ENCODE measurements at regions of chr9 and their contacts with region 1.

Region 1: GRCh38 chr9:6566409-6567139 is 79.0 kb downstream of the GLDC start:
- H3K4me3 Mint-ChIP-seq: no peak overlapping the region
- H3K27ac Mint-ChIP-seq: no peak overlapping the region
- H3K4me1 Mint-ChIP-seq: peaks cover 39% of the 10 kb centered on the region
- H3K27me3 Mint-ChIP-seq: peaks cover 3% of the 10 kb centered on the region

Region 2: DNA sequence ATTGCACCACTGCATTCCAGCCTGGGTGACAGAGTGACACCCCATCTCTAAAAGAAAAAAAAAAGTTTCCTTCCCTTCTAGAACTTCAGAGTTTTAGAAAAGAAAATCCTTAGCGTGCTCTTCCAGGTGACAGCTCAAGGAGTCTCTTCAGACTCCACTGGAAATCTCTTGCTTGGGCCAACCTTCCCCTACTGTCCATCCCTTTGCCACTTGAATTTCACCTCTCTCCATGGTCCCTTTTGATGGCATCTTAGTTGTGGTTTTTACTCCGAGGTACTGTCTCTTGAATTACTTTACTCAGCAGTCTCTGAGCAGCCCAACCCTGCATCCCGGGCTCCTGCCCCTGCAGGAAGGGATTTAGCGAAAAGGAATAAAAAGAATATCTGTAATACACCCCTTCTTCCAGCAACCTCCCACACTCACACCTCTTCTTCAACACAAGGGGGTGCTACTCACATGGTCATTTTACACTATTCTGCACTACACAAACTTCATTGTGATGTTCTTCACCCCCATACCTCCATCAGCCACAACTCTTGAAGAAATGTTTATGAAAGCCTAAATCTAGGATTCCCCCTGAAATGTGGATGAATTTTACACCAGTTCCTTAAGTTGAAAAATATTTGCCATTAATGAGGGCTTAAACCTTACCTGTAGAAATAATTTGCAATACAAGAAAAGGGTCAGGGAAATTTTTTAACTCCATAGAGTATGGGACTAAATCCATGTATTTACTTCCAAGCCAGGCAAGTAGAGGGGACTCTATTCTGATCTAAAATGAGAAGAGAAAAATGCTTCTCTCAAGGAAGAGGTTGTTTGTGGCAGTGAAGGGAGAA is 212.5 kb before region 1 on chr9:
- intact Hi-C with region 1: loop called (anchors 1 kb)
- H3K4me3 Mint-ChIP-seq: no peak overlapping the region
- H3K27ac Mint-ChIP-seq: no peak overlapping the region
- H3K4me1 Mint-ChIP-seq: no peaks in the 10 kb centered on the region
- H3K27me3 Mint-ChIP-seq: peaks cover 12% of the 10 kb centered on the region

Region 3: DNA sequence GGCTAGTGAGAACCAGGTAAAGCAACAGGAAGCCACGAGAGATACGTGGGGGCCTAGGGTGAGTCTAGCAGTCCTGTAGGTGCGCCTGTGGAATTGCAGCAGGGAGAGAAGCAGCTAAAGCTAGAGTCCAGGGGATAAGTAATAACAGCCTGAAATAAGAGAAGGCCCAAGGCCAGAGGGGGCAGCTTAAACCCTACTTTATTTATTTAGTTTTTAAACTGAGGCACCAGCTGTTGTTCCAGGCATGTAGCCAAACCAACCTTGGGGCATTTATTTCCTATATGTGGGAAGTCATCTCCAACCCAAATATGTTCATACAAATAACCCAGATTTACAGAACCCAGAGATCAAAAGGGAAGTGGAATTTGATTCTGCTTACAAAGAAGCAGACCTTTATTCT is 14.5 kb before region 1 on chr9:
- intact Hi-C with region 1: no loop called
- H3K4me3 Mint-ChIP-seq: no peak overlapping the region
- H3K27ac Mint-ChIP-seq: no peak overlapping the region
- H3K4me1 Mint-ChIP-seq: no peaks in the 10 kb centered on the region
- H3K27me3 Mint-ChIP-seq: no peaks in the 10 kb centered on the region

Region 4: GRCh38 chr9:6692881-6693361 is 126.3 kb after region 1 on chr9:
- intact Hi-C with region 1: no loop called
- H3K4me3 Mint-ChIP-seq: peak overlapping the region; percentile 20
- H3K27ac Mint-ChIP-seq: peak overlapping the region; percentile 88
- H3K4me1 Mint-ChIP-seq: peaks cover 24% of the 10 kb centered on the region
- H3K27me3 Mint-ChIP-seq: no peaks in the 10 kb centered on the region